IMR-90 (cell line): ENCODE measurements at regions of chr3 and their contacts with region 1.

Region 1: GRCh38 chr3:128426128-128426921 is 40.4 kb downstream of the DNAJB8 start:
- DNase-seq: no peak
- ATAC-seq: peak; percentile 98
- H3K4me3 ChIP-seq: no peak overlapping the region
- H3K27ac ChIP-seq: no peak overlapping the region
- H3K4me1 ChIP-seq: no peaks in the 10 kb centered on the region; the same call in 1 of the 2 replicates
- H3K27me3 ChIP-seq: peaks cover 22% of the 10 kb centered on the region
- CTCF ChIP-seq: peak; percentile 94
- POLR2A ChIP-seq: no peak
- RAD21 ChIP-seq: peak; percentile 94

Region 2: DNA sequence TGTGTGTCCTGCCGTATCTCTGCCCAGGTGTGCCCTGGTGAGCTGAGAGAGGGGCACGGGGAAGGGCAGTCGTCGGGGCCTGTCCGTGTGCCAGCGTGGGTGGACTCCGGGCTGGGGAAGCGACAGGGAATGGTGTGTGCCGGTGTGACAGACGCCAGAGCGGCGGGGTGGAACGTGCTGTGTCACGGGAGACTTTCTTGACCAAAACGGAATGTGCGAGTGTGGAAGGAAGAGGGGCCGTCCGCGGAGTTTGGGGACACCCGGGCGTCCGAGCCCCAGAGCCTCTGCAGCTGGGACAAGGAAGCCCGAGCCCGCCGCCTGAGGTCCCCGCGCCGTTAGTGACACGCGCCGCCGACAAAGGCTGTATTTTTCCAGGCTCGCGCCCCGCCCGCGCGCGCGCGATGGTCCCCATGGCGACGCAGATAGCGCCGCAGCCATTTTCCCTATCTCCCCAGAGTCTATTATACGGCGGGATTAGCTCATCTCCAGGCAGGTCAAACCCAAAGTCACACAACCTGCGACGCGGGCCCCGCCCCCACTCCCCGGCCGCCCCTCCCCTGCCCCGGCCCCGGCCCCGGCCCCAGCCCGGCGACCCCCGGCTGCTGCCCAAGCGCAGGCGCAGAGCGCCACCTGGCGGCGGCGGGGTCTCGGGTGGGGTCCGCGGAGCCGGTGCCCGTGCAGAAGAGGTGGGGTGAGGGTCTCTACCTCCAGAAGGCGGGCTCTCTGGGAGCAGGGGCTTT is 71.2 kb after region 1 on chr3:
- CTCF ChIA-PET with region 1: interaction called, 4 read pairs
- POLR2A ChIA-PET with region 1: no interaction called
- dilution Hi-C with region 1: no loop called
- in situ Hi-C with region 1: loop called (anchors 5 kb)
- intact Hi-C with region 1: loop called (anchors 1 kb)
- DNase-seq: no peak
- ATAC-seq: peak; percentile 69
- H3K4me3 ChIP-seq: peak overlapping the region; percentile 57
- H3K27ac ChIP-seq: no peak overlapping the region
- H3K4me1 ChIP-seq: peaks cover 5% of the 10 kb centered on the region
- H3K27me3 ChIP-seq: peaks cover 34% of the 10 kb centered on the region
- CTCF ChIP-seq: peak; percentile 54
- POLR2A ChIP-seq: no peak
- RAD21 ChIP-seq: peak; percentile 57